OCI-LY7 (cell line): ENCODE measurements at regions of chr11 and their contacts with region 1.

Region 1: DNA sequence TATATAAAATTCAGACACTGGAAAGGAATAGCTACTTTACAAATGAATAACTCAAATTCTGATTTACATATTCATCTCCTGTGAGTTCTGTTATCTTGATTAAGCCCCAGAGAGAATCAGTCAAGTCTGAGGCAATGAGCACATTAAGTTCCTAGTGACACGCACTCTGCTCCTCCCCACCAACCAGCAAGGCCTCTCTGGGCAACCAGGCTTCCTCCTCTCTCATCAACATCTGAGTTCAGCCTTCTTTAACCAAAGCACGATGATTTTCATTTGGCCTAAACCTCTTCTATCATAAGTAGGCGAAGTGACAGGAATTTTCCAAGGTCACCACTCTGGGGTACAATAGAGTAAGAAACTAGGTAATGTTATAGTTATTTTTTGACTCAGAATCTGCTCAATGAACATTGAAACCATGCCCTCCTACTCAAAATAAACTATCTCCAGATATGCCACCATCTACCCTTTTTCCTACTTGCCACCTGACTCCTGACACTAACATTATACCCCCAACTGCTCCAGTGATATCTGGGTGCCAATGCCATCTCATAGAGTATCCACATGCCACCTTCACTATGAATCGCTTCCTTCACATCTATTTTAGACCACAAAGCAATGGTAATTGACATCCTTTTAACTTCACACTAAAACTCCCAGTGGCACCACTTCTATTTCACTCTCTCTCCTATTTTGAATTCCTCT is 114.8 kb downstream of the FAM76B start:
- DNase-seq: no peak
- H3K4me3 ChIP-seq: no peak overlapping the region
- H3K27ac ChIP-seq: no peak overlapping the region
- H3K4me1 ChIP-seq: no peaks in the 10 kb centered on the region
- CTCF ChIP-seq: no peak

Region 2: DNA sequence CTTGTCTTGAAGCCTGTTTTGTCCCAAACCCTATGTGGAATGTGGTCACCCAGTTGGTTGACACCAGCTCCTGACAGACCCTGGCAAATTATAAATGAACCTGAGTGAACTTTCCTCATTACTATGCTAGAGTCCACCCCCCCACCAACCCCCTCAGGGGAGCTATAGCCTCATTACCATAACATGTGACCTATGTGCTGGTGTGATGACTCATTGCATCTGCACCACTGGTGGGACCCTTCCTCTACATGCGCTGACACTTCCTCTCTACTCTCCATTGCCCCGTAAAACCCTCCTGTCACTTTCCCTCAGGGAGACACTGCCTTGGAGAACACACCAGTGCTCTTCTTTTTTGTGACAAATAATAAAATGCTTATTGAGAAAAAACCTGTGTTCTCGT is 338.8 kb before region 1 on chr11:
- CTCF ChIA-PET with region 1: no interaction called
- POLR2A ChIA-PET with region 1: no interaction called
- intact Hi-C with region 1: no loop called
- DNase-seq: no peak
- H3K4me3 ChIP-seq: no peak overlapping the region
- H3K27ac ChIP-seq: no peak overlapping the region
- H3K4me1 ChIP-seq: no peaks in the 10 kb centered on the region
- CTCF ChIP-seq: no peak

Region 3: DNA sequence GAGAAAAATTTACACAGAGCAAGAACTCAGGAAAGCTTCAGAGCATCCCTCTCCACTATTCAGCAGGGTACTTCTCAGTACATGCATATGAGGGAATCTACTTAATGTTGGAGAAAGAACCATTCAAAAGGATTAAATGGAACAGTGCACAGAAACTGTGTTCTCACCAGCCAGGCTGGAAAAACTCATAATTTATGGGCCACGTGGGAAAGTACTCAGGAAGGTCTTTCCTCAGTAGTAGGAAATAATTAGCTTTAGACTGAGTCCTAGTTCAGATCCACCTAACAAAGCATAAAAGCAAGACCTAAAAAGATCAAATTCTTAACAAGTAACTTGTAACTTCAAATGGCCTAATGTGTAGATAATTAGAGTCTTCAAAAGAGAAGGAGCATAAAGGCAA is 19.3 kb before region 1 on chr11:
- CTCF ChIA-PET with region 1: no interaction called
- POLR2A ChIA-PET with region 1: no interaction called
- intact Hi-C with region 1: loop called (anchors 1 kb)
- DNase-seq: no peak
- H3K4me3 ChIP-seq: no peak overlapping the region
- H3K27ac ChIP-seq: no peak overlapping the region
- H3K4me1 ChIP-seq: no peaks in the 10 kb centered on the region
- CTCF ChIP-seq: no peak